Caco-2 (cell line): ENCODE measurements at regions of chr12 and their contacts with region 1.

Region 1: GRCh38 chr12:57016318-57016717 is at the start of gene TAC3:
- DNase-seq: peak in 1 of 2 experiments; percentile 41
- H3K4me3 ChIP-seq: no peak within 1 kb of the TSS
- H3K4me3 Mint-ChIP-seq: no peak within 1 kb of the TSS
- H3K27ac Mint-ChIP-seq: no peak within 1 kb of the TSS
- H3K4me1 ChIP-seq: peaks cover 23% of the 10 kb centered on the region
- H3K4me1 Mint-ChIP-seq: peaks cover 16% of the 10 kb centered on the region
- H3K27me3 ChIP-seq: no peaks in the 10 kb centered on the region
- H3K27me3 Mint-ChIP-seq: no peaks in the 10 kb centered on the region
- CTCF ChIP-seq: no peak
- total RNA-seq, gene TAC3: 1.6 and 3.1 TPM in 2 replicates

Region 2: DNA sequence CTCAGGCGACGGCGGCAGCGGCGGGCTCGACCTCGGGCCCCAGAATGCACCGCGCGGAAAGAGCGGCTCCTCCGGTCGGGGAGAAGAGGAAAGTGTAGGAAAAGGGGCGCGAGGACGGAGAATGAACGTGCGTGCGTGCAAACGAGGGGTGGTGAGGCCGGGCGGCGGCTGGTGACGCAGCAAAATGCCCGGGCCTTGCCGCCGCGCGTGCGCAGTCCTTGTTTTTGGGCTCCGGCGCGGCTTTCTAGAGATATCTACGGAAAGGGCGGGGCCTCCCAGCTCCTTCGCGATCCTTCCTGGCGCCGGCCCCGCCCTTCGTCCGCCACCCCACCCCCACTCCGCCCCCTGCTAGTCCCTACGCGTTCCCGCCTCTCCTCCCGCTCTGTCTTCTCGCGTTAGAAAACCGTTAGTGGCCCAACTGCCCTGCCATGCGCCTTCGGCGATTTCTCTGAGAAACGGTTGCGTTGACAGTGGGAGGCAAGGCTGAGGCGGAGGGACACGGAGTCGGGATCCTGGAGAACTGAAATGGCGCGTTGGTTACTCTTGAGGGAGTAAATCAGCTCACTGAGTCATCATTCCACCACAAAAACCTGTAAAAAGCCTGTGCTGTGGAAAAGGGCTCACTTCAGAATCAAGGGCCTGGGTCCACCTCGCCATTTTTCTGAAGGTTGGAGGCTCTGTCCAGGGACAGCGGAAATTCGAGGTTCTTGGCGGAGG is 328.0 kb before region 1 on chr12 and contains the start of gene PTGES3:
- CTCF ChIA-PET with region 1: interaction called, 7 read pairs
- POLR2A ChIA-PET with region 1: interaction called, 10 read pairs
- intact Hi-C with region 1: no loop called
- DNase-seq: peak; percentile 98
- H3K4me3 ChIP-seq: peak within 1 kb of the TSS; percentile 68
- H3K4me3 Mint-ChIP-seq: peak within 1 kb of the TSS; percentile 87
- H3K27ac Mint-ChIP-seq: peak within 1 kb of the TSS; percentile 92
- H3K4me1 ChIP-seq: no peaks in the 10 kb centered on the region
- H3K4me1 Mint-ChIP-seq: no peaks in the 10 kb centered on the region
- H3K27me3 ChIP-seq: no peaks in the 10 kb centered on the region
- H3K27me3 Mint-ChIP-seq: no peaks in the 10 kb centered on the region
- CTCF ChIP-seq: no peak
- total RNA-seq, gene PTGES3: 241 and 242 TPM in 2 replicates

Region 3: GRCh38 chr12:57049890-57050289 is 33.6 kb after region 1 on chr12 and contains the start of gene MYO1A:
- CTCF ChIA-PET with region 1: interaction called, 3 read pairs
- POLR2A ChIA-PET with region 1: interaction called, 12 read pairs
- intact Hi-C with region 1: no loop called
- DNase-seq: peak; percentile 49 to 57
- H3K4me3 ChIP-seq: peak within 1 kb of the TSS; percentile 25
- H3K4me3 Mint-ChIP-seq: peak within 1 kb of the TSS; percentile 57
- H3K27ac Mint-ChIP-seq: peak within 1 kb of the TSS; percentile 27
- H3K4me1 ChIP-seq: peaks cover 22% of the 10 kb centered on the region
- H3K4me1 Mint-ChIP-seq: peaks cover 28% of the 10 kb centered on the region
- H3K27me3 ChIP-seq: no peaks in the 10 kb centered on the region
- H3K27me3 Mint-ChIP-seq: no peaks in the 10 kb centered on the region
- CTCF ChIP-seq: no peak
- total RNA-seq, gene MYO1A: 9.3 and 11.9 TPM in 2 replicates